Mammary epithelial cell (primary cell): ENCODE measurements at regions of chr4 and their contacts with region 1.

Region 1: DNA sequence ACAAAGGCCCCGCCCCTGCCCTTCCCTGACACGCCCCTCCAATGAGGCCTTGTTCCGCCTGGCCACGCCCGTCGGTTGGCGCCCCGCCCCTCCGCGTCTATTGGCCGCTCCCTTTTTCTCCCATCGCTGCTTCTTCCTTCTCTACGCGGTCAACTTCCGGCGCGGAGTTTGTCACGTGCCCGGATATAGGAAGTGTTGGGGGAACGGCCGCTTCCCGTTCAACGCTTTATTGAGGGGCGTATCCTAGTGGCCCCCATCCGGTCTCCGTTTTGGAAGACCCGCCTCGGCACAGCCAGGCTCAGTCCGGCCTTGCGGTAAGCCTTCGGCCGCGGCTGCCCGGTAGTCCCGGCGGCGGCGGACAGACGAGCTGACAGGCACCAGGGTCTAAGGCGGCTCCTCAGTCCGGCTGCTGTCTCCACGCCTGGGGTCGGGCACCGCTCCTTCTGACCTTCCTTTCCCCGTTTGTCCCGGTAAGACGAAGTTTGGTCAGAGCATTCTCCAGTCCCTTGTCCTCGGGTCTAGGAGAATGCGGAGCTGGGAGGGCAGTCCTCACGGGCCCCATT is at the start of gene EXOC1:
- DNase-seq: peak; percentile 93
- H3K4me3 ChIP-seq: peak within 1 kb of the TSS; percentile 72 to 95 (median 83)
- H3K27ac ChIP-seq: peak within 1 kb of the TSS; percentile 60
- H3K4me1 ChIP-seq: peaks cover 22% of the 10 kb centered on the region
- H3K27me3 ChIP-seq: no peaks in the 10 kb centered on the region
- CTCF ChIP-seq: no peak
- total RNA-seq, gene EXOC1: 33.2 to 37.3 TPM

Region 2: DNA sequence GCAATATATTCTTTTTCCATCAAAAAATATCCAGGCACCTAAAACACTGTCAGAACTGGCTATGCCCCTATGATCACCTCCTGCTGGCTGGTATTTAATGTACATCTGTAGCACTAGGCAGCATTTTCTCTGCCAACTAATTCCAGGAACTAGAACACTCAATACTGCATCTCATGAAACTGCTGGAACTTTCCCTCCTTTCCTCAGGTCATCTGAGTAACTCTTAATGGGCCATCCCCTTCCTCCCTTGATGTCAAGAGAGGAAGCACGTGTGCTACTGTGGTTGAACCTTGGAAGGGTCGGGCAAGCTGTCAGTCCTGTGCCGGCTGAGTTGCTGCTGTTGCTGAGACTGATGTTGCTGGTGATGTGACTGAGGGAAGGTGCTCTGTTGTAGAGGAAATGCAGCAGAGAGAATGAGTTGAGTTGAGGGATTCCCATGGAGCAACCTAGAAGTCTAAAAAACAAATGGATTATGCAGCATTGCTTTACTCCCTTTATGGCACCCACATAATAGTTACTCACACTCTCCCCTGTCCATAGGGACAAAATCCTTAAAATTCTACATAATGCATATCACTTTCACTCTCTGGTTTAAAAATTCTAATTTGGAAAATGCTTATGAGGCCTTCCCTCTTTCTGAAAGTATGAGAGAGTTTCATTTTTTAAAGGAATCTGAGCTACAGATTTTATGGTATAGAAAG is 418.3 kb before region 1 on chr4:
- CTCF ChIA-PET with region 1: no interaction called
- dilution Hi-C with region 1: no loop called
- in situ Hi-C with region 1: loop called in 1 of 2 experiments (anchors 25 kb)
- intact Hi-C with region 1: no loop called
- DNase-seq: no peak
- H3K4me3 ChIP-seq: no peak overlapping the region
- H3K27ac ChIP-seq: no peak overlapping the region
- H3K4me1 ChIP-seq: no peaks in the 10 kb centered on the region
- H3K27me3 ChIP-seq: no peaks in the 10 kb centered on the region
- CTCF ChIP-seq: peak; percentile 12 to 39

Region 3: DNA sequence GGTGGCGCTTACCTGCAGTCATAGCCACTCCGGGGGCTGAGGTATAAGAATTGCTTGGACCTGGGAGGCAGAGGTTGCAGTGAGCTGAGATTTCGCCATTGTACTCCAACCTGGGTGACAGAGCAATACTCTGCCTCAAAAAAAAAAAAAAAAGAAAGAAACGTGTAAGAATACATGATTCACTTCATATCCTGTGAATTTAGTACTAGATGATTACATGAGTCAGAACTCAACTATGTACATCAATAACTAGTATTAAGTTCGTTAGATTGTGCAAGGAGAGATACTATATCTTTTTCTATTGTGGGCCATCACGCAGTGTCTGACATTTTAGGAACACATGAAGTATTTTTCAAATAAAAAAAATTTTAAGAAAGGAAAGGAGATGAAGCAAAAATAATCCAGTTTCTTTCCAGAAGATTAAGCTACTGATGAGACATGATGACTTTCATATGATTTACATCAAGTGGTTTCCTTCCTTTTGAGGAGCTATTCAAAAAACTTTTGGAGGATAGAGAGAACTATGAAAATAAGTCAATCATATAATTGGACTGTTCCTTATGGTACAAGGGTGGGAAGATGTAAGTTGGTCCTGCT is 98.7 kb before region 1 on chr4:
- CTCF ChIA-PET with region 1: no interaction called
- dilution Hi-C with region 1: no loop called
- in situ Hi-C with region 1: no loop called
- intact Hi-C with region 1: loop called (anchors 2 kb)
- DNase-seq: peak; percentile 72
- H3K4me3 ChIP-seq: no peak overlapping the region
- H3K27ac ChIP-seq: peak overlapping the region; percentile 11
- H3K4me1 ChIP-seq: peaks cover 22% of the 10 kb centered on the region
- H3K27me3 ChIP-seq: no peaks in the 10 kb centered on the region
- CTCF ChIP-seq: no peak

Region 4: GRCh38 chr4:55793479-55793878 is 60.1 kb before region 1 on chr4:
- CTCF ChIA-PET with region 1: no interaction called
- dilution Hi-C with region 1: no loop called
- in situ Hi-C with region 1: no loop called
- intact Hi-C with region 1: loop called (anchors 5 kb)
- DNase-seq: no peak
- H3K4me3 ChIP-seq: no peak overlapping the region
- H3K27ac ChIP-seq: no peak overlapping the region
- H3K4me1 ChIP-seq: peaks cover 10% of the 10 kb centered on the region
- H3K27me3 ChIP-seq: peaks cover 6% of the 10 kb centered on the region
- CTCF ChIP-seq: no peak

Region 5: DNA sequence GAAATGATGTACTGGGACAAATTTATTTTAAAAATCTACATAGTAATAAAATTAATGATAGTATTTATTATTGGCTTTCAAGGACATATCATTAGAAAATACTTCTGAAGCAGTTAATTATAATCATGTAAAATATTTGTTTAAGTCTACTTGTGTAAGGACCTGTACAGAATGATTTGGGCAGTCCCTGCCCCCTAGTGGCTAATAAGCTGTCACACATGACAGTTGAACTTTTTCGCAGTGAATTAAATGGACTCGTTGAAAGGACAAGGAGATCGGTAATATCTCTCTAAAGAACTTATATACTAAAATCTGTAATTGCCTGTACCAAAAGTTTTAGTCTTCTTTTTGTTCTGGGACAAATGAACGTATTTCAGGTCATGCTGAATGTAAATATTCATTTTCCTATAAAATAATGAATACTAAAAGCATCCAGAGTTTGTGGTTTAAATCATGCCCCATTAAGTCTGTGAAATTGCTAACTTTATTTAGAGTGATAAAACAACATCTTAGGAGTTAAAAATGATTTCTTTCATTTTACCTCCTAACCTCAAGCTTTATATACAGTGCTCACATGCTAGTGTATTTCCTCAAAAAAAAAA is 13.5 kb after region 1 on chr4:
- CTCF ChIA-PET with region 1: no interaction called
- dilution Hi-C with region 1: no loop called
- in situ Hi-C with region 1: no loop called
- intact Hi-C with region 1: loop called (anchors 1 kb)
- DNase-seq: peak; percentile 54
- H3K4me3 ChIP-seq: no peak overlapping the region
- H3K27ac ChIP-seq: peak overlapping the region; percentile 59
- H3K4me1 ChIP-seq: peaks cover 20% of the 10 kb centered on the region
- H3K27me3 ChIP-seq: no peaks in the 10 kb centered on the region
- CTCF ChIP-seq: peak; percentile 82 to 88

Region 6: GRCh38 chr4:55939421-55939820 is 85.9 kb after region 1 on chr4:
- CTCF ChIA-PET with region 1: no interaction called
- dilution Hi-C with region 1: no loop called
- in situ Hi-C with region 1: no loop called
- intact Hi-C with region 1: no loop called
- DNase-seq: no peak
- H3K4me3 ChIP-seq: no peak overlapping the region
- H3K27ac ChIP-seq: no peak overlapping the region
- H3K4me1 ChIP-seq: no peaks in the 10 kb centered on the region
- H3K27me3 ChIP-seq: no peaks in the 10 kb centered on the region
- CTCF ChIP-seq: no peak

Region 7: DNA sequence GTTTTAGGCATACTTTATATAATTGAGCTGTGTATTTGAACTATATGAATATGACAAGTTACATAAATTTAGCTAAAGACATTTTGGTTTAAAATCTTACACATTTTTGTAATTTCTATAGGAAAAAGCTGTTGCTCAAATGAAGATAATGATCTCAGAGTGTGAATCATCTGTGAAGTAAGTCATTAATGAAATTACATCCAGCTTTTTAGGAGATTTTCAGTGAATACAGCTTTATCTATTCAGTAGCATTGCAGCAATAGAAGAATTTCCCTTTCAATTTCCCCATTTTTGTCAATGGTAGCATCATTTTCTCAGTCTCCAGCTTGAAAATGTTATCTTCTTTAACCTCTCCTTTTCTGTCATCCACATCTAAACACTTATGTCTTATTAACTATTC is 154.6 kb after region 1 on chr4:
- CTCF ChIA-PET with region 1: no interaction called
- dilution Hi-C with region 1: no loop called
- in situ Hi-C with region 1: no loop called
- intact Hi-C with region 1: no loop called
- DNase-seq: no peak
- H3K4me3 ChIP-seq: no peak overlapping the region
- H3K27ac ChIP-seq: no peak overlapping the region
- H3K4me1 ChIP-seq: no peaks in the 10 kb centered on the region
- H3K27me3 ChIP-seq: no peaks in the 10 kb centered on the region
- CTCF ChIP-seq: no peak